Psoas muscle (tissue), 8 donors: ENCODE measurements at regions of chr7 and their contacts with region 1.

Region 1: DNA sequence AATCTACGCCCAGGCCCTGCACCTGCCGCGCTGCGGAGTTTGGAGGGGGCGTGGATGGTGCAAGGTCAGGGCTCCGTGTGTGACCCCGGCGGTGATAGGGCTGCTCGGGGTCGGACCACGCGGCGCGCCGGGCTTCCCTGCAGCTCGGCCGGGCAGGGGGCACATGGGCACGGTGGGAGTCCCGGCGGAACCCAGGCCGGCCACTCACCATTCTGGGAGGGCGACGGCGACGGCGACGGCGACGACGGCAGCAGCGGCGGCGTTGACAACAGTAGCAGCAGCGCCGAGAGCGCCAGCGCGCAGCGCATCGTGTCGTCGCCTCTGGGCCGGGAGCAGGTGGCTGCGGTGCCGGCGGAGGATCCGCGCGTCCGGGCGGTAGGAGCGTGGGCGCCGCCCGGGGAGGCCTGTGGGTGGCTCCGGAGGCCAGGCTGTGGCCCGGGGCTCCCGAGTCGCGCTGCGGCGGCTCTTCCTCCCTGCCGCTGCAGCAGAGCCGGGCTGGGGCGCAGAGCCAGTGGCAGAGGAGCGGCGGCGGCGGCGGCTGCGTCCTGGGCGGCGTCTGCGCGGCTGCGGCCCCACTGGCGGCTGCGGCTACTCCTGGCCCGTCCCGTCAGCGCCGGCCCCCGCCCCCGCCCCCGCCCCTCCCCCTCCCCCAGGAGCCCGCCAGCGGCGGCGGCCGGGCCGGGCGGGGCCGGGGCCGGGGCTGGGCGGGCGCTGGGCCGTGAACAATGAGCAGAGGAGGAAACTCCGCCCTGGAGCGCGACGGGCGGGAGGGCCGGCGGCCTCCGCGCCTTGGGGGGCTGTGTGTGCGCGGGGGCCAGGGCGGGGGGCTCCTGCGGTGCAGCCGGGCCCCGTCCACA is at the start of gene PODXL:
- DNase-seq: peak; percentile 80 to 89
- ATAC-seq: peak; percentile 78 to 88 (median 84)
- H3K4me3 ChIP-seq: peak within 1 kb of the TSS; percentile 79
- H3K27ac ChIP-seq: peak within 1 kb of the TSS; percentile 77
- H3K4me1 ChIP-seq: peaks cover 12% of the 10 kb centered on the region
- H3K27me3 ChIP-seq: peaks cover 0 to 6% (median 0%) of the 10 kb centered on the region in 3 donors
- CTCF ChIP-seq: no peak
- total RNA-seq, gene PODXL: 16.2 to 46.8 (median 21.8) TPM

Region 2: GRCh38 chr7:131513245-131514061 is 42.8 kb before region 1 on chr7:
- intact Hi-C with region 1: no loop called
- DNase-seq: peak; percentile 84 to 91
- ATAC-seq: peak; percentile 96 to 98 (median 96)
- H3K4me3 ChIP-seq: no peak overlapping the region
- H3K27ac ChIP-seq: peak overlapping the region; percentile 70
- H3K4me1 ChIP-seq: peaks cover 17% of the 10 kb centered on the region
- H3K27me3 ChIP-seq: no peaks in the 10 kb centered on the region
- CTCF ChIP-seq: peak; percentile 94

Region 3: GRCh38 chr7:131581241-131582051 is 25.2 kb after region 1 on chr7:
- intact Hi-C with region 1: loop called in 1 of 2 experiments (anchors 2 kb)
- DNase-seq: peak; percentile 71 to 95
- ATAC-seq: peak; percentile 88 to 96 (median 91)
- H3K4me3 ChIP-seq: peak overlapping the region; percentile 36
- H3K27ac ChIP-seq: peak overlapping the region; percentile 78
- H3K4me1 ChIP-seq: peaks cover 16% of the 10 kb centered on the region
- H3K27me3 ChIP-seq: no peaks in the 10 kb centered on the region
- CTCF ChIP-seq: peak; percentile 22

Region 4: GRCh38 chr7:131604841-131605279 is 48.6 kb after region 1 on chr7:
- intact Hi-C with region 1: no loop called
- DNase-seq: no peak
- ATAC-seq: no peak
- H3K4me3 ChIP-seq: no peak overlapping the region
- H3K27ac ChIP-seq: no peak overlapping the region
- H3K4me1 ChIP-seq: no peaks in the 10 kb centered on the region
- H3K27me3 ChIP-seq: no peaks in the 10 kb centered on the region
- CTCF ChIP-seq: no peak